Head of caudate nucleus (tissue), 42 donors: ENCODE measurements at regions of chr16 and their contacts with region 1.

Region 1: DNA sequence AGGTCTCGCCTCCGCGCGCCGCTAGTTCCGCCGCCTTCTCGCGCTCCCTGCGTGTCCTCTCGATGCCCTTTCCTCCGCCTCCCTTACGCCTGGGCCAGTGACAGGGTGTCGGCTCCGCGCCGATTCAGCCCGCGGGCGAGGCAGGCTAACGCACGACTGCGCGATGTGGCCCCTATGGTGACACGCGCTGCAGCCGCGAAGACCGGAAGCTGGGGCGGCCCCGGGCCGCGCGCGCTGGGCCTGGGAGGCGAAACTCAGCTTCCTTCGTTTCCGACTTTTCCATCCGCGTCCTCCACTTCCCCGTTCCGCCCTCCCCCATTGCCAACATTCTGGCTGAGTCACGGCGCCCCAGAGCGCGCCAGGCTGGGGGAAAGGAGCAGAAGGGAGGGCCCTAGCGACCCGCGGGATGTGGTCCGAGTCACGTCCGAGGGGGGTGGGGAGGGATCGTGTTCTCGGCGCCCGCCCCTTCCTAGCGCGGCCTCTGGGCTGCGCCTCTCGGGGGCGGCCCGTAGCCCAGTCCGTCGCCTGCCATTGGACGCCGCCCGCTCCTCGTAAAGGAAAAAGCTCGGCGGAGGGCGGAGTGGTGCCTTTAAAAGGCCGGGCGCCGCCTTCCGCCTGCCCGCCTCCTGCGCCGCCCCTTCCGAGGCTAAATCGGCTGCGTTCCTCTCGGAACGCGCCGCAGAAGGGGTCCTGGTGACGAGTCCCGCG is at the start of gene ALDOA:
- DNase-seq: peak; percentile 94 to 99 (median 98)

Region 2: GRCh38 chr16:29943846-29944669 is 121.2 kb before region 1 on chr16:
- intact Hi-C with region 1: no loop called
- DNase-seq: peak in 41 of 42 donors; percentile 18 to 90 (median 64)

Region 3: GRCh38 chr16:30122604-30123160 is 57.4 kb after region 1 on chr16:
- intact Hi-C with region 1: loop called (anchors 5 kb)
- DNase-seq: peak in 9 of 42 donors; percentile 13 to 58 (median 20)

Region 4: GRCh38 chr16:30136971-30137605 is 71.8 kb after region 1 on chr16:
- intact Hi-C with region 1: no loop called
- DNase-seq: no peak